Kidney (tissue), 22 donors: ENCODE measurements at regions of chr15 and their contacts with region 1.

Region 1: DNA sequence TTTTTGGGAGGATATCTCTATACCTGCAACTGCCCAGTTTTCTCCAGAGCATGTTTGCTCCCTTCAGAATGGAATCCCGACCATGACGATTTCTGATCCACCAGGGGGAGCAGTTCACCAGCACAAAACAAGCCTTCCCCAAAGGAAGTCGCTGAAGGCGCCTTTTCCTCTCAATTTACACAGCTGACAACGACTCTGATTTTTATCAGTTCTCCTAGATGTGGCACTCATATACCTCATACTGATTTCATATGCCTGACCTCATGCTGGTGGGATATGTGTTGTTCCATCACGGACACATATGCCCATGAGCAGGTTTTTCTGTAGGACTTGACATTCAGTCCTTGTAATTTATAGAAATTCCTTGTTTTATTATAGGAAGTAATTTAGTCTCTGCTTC is 1028.2 kb downstream of the MCTP2 start:
- DNase-seq: peak; percentile 66 to 96 (median 86)
- H3K4me3 ChIP-seq: no peak overlapping the region
- H3K27ac ChIP-seq: peak overlapping the region in 1 of 2 donors; percentile 76
- H3K4me1 ChIP-seq: peaks cover 0 to 5% (median 5%) of the 10 kb centered on the region in 3 donors
- H3K27me3 ChIP-seq: no peaks in the 10 kb centered on the region
- CTCF ChIP-seq: peak; percentile 80

Region 2: GRCh38 chr15:94366781-94367180 is 892.7 kb before region 1 on chr15:
- intact Hi-C with region 1: loop called (anchors 10 kb)
- DNase-seq: no peak
- H3K4me3 ChIP-seq: no peak overlapping the region
- H3K27ac ChIP-seq: no peak overlapping the region
- H3K4me1 ChIP-seq: peaks cover 0 to 6% (median 0%) of the 10 kb centered on the region in 3 donors
- H3K27me3 ChIP-seq: no peaks in the 10 kb centered on the region
- CTCF ChIP-seq: no peak

Region 3: GRCh38 chr15:95152741-95153140 is 106.8 kb before region 1 on chr15:
- intact Hi-C with region 1: no loop called
- DNase-seq: no peak
- H3K4me3 ChIP-seq: no peak overlapping the region
- H3K27ac ChIP-seq: no peak overlapping the region
- H3K4me1 ChIP-seq: no peaks in the 10 kb centered on the region
- H3K27me3 ChIP-seq: no peaks in the 10 kb centered on the region
- CTCF ChIP-seq: no peak

Region 4: DNA sequence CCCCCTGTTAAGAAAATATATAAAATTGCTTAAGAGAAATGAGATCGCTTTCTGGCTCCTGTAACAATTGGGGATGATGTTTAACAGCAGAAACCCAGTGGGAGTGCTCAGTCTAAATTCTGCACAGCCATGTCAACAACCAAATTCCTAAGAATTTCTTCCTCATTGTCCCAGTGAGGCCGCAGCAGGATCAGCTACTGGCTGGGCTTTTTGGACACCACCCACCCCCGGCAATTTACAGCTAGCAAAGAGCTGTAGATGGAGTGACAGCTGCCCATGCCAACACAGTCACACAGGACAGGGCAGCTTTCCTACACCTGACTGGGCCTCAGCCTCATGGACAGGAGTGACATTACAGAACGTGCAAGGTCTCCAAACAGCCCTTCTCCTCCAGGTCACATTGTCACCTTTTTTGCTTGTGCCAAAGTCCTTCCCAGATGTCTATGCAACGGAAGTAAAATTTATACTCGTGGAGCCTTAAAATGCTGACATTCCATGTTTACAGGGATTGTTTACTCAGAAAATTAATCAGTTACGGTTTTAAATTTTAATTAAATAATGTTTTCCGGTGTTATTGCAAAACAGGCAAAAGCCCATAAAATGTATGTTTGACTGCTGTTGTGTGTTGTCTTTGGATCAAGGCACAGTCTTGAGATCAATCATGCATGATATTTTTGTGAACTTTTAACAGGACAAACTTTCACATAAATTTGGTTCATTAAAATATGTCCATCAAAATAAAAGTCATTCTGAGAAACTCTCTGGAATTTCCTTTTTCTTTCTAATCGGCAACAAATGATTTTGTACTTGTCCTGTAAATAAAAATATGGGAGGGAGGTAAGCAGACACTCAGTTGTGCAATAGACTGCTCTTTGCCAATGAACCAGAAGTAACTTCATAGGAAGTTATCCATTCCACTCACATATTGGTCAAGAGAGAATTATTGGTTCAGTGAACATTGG is 84.9 kb before region 1 on chr15:
- intact Hi-C with region 1: no loop called
- DNase-seq: peak; percentile 55 to 93 (median 84)
- H3K4me3 ChIP-seq: peak overlapping the region in 2 of 3 donors; percentile 17 to 23
- H3K27ac ChIP-seq: peak overlapping the region in 1 of 2 donors; percentile 71
- H3K4me1 ChIP-seq: peaks cover 2 to 24% (median 8%) of the 10 kb centered on the region in 3 donors
- H3K27me3 ChIP-seq: no peaks in the 10 kb centered on the region
- CTCF ChIP-seq: no peak

Region 5: GRCh38 chr15:95226850-95227634 is 32.5 kb before region 1 on chr15:
- intact Hi-C with region 1: no loop called
- DNase-seq: peak in 1 of 5 donors; percentile 16
- H3K4me3 ChIP-seq: no peak overlapping the region
- H3K27ac ChIP-seq: no peak overlapping the region
- H3K4me1 ChIP-seq: no peaks in the 10 kb centered on the region
- H3K27me3 ChIP-seq: no peaks in the 10 kb centered on the region
- CTCF ChIP-seq: no peak

Region 6: DNA sequence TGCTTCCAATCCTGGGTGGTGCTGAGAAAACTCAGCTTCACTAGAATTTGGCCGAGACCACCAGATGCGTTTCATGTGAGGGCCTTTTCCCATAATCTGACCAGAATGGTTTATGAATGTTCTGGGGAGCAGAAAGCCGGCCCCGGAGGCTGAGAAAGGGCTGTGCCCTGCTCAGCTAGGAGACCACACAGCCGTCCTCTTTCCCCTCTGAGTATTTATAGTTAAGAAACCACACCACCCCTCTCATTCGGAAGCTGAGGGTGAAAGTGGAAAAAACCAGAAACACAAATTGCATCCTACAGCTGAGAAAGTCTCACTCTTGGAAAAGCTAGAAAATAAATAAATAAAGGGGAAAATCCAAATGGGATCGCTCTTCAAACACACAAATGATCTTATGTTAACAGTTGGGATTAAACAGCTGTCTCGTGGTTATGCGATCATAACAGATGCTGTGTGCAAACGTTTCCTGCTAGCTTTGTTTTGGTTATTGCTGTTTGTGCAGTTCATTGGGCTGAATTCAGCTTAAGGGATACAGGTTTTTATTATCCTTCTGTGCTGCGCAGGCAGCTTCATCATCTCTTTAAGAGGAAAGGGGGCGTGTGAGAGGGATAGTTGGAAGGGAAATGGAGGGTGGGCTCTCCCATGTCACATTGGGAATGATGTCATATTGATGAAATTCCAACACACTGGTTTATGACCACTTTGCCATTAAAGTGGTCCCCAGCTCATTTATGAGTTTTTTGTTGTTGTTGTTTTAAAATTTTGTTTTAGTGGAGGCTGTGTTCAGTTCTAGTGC is 44.8 kb after region 1 on chr15:
- intact Hi-C with region 1: no loop called
- DNase-seq: peak in 3 of 5 donors; percentile 56 to 94 (median 79)
- H3K4me3 ChIP-seq: peak overlapping the region in 1 of 3 donors; percentile 12
- H3K27ac ChIP-seq: peak overlapping the region; percentile 54 to 65
- H3K4me1 ChIP-seq: peaks cover 0 to 5% (median 0%) of the 10 kb centered on the region in 3 donors
- H3K27me3 ChIP-seq: no peaks in the 10 kb centered on the region
- CTCF ChIP-seq: no peak